Caco-2 (cell line): ENCODE measurements at regions of chr9 and their contacts with region 1.

Region 1: GRCh38 chr9:85142968-85143367 is 473.4 kb downstream of the NTRK2 start:
- DNase-seq: peak in 1 of 2 experiments; percentile 2
- H3K4me3 ChIP-seq: no peak overlapping the region
- H3K4me3 Mint-ChIP-seq: no peak overlapping the region
- H3K27ac Mint-ChIP-seq: no peak overlapping the region
- H3K4me1 ChIP-seq: no peaks in the 10 kb centered on the region
- H3K4me1 Mint-ChIP-seq: no peaks in the 10 kb centered on the region
- H3K27me3 ChIP-seq: no peaks in the 10 kb centered on the region
- H3K27me3 Mint-ChIP-seq: no peaks in the 10 kb centered on the region
- CTCF ChIP-seq: peak; percentile 23 to 44

Region 2: GRCh38 chr9:84668196-84669012 is 474.6 kb before region 1 on chr9:
- CTCF ChIA-PET with region 1: no interaction called
- POLR2A ChIA-PET with region 1: no interaction called
- intact Hi-C with region 1: loop called (anchors 1 kb)
- DNase-seq: peak in 1 of 2 experiments; percentile 61
- H3K4me3 ChIP-seq: peak overlapping the region; percentile 10; the same call in 1 of the 2 replicates
- H3K4me3 Mint-ChIP-seq: peak overlapping the region; percentile 66
- H3K27ac Mint-ChIP-seq: no peak overlapping the region
- H3K4me1 ChIP-seq: no peaks in the 10 kb centered on the region
- H3K4me1 Mint-ChIP-seq: no peaks in the 10 kb centered on the region
- H3K27me3 ChIP-seq: no peaks in the 10 kb centered on the region
- H3K27me3 Mint-ChIP-seq: peaks cover 22% of the 10 kb centered on the region
- CTCF ChIP-seq: peak in 1 of 2 experiments; percentile 35

Region 3: DNA sequence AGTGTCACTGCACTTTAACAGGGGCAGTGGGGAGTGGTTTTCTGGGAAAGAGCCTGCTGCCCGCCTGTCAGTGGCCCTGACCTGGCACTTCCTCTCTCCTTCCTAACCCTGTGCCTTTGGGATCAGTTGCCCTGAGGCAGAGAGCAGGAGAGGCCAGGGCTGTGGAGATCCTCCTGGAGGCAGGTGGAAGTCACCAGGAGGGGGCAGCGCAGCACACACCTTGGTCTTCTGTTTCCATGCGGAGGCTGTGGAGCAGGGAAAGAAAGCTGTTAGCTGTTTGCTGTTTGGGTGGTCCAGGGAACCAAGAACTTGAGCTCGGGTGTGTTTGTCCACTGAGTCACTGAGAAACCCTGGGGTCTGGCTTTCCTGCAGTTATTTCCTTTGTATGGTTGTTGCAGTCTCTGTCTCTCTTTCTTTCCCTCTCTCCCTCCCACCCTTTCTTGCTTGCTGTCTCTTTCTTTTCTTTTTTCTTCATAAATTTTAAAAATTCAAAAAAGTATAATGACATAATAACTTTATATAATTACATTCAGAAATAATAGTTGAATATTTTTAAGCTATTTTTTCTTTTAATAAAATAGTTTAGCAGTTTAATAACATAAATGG is 445.4 kb before region 1 on chr9:
- CTCF ChIA-PET with region 1: no interaction called
- POLR2A ChIA-PET with region 1: no interaction called
- intact Hi-C with region 1: loop called (anchors 10 kb)
- DNase-seq: peak; percentile 50 to 51
- H3K4me3 ChIP-seq: no peak overlapping the region
- H3K4me3 Mint-ChIP-seq: no peak overlapping the region
- H3K27ac Mint-ChIP-seq: no peak overlapping the region
- H3K4me1 ChIP-seq: no peaks in the 10 kb centered on the region
- H3K4me1 Mint-ChIP-seq: no peaks in the 10 kb centered on the region
- H3K27me3 ChIP-seq: no peaks in the 10 kb centered on the region
- H3K27me3 Mint-ChIP-seq: peaks cover 5% of the 10 kb centered on the region
- CTCF ChIP-seq: peak; percentile 38 to 47

Region 4: DNA sequence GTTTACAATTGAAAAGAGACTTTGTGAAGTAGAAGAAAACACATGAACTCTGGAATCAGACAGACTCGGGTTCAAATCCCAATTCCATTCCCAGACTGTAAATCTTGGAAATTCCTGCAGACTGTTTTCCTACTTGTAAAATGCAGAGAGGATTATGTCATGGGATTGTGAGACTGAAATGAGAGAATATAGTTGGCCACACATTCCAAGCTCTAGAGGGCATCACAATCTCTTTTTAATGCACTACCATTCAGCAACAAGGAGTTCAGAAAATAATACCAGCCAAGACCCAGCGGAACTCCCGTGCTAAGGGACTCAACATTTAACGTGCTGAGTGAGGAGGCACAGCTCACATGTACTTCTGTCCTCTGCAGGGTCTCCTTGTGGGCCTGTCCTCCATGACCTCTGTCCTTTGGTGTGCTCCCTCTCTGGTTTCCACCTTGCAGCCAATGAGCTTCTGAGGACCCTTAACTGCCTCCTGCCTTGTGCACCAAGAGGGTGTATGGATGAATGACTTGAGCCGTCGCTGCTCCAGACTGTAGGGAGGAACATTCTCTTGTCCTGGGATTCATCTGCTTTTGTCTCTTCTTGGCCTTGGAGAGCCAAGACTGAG is 209.9 kb before region 1 on chr9:
- CTCF ChIA-PET with region 1: interaction called, 3 read pairs
- POLR2A ChIA-PET with region 1: no interaction called
- intact Hi-C with region 1: loop called (anchors 5 kb)
- DNase-seq: no peak
- H3K4me3 ChIP-seq: no peak overlapping the region
- H3K4me3 Mint-ChIP-seq: no peak overlapping the region
- H3K27ac Mint-ChIP-seq: no peak overlapping the region
- H3K4me1 ChIP-seq: no peaks in the 10 kb centered on the region
- H3K4me1 Mint-ChIP-seq: no peaks in the 10 kb centered on the region
- H3K27me3 ChIP-seq: no peaks in the 10 kb centered on the region
- H3K27me3 Mint-ChIP-seq: no peaks in the 10 kb centered on the region
- CTCF ChIP-seq: no peak

Region 5: DNA sequence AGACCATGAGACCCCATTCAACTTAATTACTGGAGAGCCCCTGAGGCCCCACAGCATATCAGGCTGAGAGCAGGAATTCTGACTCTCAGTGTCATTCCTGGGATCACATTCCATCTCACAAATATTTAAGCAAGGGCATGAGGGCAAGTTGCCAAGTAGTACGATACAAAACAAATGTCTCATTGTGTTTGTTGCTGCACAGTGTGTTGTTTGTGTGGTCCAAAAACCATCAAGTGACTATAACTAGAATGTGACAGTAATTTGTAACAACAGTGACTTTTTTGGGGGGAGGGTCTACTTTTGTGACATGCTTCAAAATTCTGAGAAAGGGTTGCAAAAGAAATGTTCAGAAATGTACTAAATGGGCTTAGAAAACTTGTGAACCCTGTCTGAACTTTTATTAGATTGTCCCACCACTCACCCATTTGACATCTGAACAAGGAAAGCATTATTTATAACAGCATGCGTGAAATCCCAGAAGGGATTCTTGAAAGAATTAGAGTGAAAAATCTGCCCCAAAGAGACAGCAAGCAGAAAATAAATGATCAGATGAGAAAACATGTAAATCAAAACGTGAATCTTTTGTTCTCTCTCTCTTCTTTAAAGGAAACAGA is 126.5 kb before region 1 on chr9:
- CTCF ChIA-PET with region 1: no interaction called
- POLR2A ChIA-PET with region 1: no interaction called
- intact Hi-C with region 1: loop called (anchors 10 kb)
- DNase-seq: no peak
- H3K4me3 ChIP-seq: no peak overlapping the region
- H3K4me3 Mint-ChIP-seq: no peak overlapping the region
- H3K27ac Mint-ChIP-seq: no peak overlapping the region
- H3K4me1 ChIP-seq: no peaks in the 10 kb centered on the region
- H3K4me1 Mint-ChIP-seq: no peaks in the 10 kb centered on the region
- H3K27me3 ChIP-seq: no peaks in the 10 kb centered on the region
- H3K27me3 Mint-ChIP-seq: no peaks in the 10 kb centered on the region
- CTCF ChIP-seq: no peak

Region 6: GRCh38 chr9:85178474-85178873 is 35.5 kb after region 1 on chr9:
- CTCF ChIA-PET with region 1: no interaction called
- POLR2A ChIA-PET with region 1: no interaction called
- intact Hi-C with region 1: no loop called
- DNase-seq: no peak
- H3K4me3 ChIP-seq: no peak overlapping the region
- H3K4me3 Mint-ChIP-seq: no peak overlapping the region
- H3K27ac Mint-ChIP-seq: no peak overlapping the region
- H3K4me1 ChIP-seq: no peaks in the 10 kb centered on the region
- H3K4me1 Mint-ChIP-seq: no peaks in the 10 kb centered on the region
- H3K27me3 ChIP-seq: no peaks in the 10 kb centered on the region
- H3K27me3 Mint-ChIP-seq: no peaks in the 10 kb centered on the region
- CTCF ChIP-seq: no peak

Region 7: GRCh38 chr9:85192750-85193149 is 49.8 kb after region 1 on chr9:
- CTCF ChIA-PET with region 1: no interaction called
- POLR2A ChIA-PET with region 1: no interaction called
- intact Hi-C with region 1: no loop called
- DNase-seq: no peak
- H3K4me3 ChIP-seq: no peak overlapping the region
- H3K4me3 Mint-ChIP-seq: no peak overlapping the region
- H3K27ac Mint-ChIP-seq: no peak overlapping the region
- H3K4me1 ChIP-seq: no peaks in the 10 kb centered on the region
- H3K4me1 Mint-ChIP-seq: no peaks in the 10 kb centered on the region
- H3K27me3 ChIP-seq: no peaks in the 10 kb centered on the region
- H3K27me3 Mint-ChIP-seq: no peaks in the 10 kb centered on the region
- CTCF ChIP-seq: no peak